ENCODE measurements at regions of chr9 and their contacts with region 1.

Region 1: DNA sequence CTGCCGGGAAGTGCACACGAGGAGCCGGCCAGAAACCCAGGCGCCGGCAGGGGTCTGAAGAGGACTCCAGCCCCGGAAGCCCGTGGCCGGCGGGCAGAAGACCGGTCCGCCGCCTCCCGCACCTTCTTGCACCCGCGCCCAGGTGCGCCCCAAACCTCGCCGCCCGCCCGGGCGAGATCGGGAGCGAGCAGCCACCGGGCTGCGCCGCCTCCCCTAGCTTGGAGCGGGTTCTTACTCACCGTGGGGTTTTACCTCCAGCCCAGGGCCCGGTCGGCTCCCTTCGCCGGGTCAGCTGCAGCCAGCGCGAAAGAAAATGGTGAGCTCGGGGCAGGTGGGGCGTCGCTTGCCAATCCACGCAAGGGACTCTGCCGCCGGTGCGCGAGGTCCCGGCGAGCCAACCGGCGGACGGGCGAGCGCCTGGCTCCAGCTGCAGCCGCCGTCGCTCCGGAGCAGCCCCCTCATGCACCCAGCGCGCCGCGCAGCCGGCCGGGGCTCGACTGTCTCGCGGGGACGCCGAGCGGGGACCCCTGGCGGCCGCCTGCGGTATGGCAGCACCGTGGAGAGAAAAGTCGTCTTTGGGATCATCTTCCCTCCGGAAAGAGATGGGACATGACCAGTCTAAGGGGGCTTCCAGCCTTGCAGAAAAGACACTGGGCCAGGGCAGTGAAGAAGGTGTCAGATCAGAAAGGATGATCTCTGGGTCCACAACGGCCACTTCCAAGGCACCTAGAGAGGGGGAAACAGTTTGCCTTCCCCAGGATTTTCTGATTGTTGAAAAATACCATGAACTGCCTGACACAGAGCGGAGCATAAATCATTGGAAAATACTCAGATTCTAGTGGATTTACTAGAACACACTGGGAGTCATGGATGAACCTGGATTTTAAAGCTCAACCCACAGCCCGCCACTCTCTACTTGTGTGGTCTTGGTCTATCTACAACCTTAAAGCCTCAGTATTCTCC is at the start of gene MOB3B:
- DNase-seq: peak; percentile 80 to 93 (median 86)
- ATAC-seq: peak; percentile 41 to 94 (median 84)
- H3K4me3 ChIP-seq: peak within 1 kb of the TSS; percentile 67 to 93 (median 80)
- H3K27ac ChIP-seq: peak within 1 kb of the TSS; percentile 17 to 92 (median 74)
- H3K4me1 ChIP-seq: peaks cover 0 to 38% (median 7%) of the 10 kb centered on the region in 12 donors
- H3K27me3 ChIP-seq: no peaks in the 10 kb centered on the region
- CTCF ChIP-seq: peak; percentile 82 to 98 (median 95)
- POLR2A ChIP-seq: no peak
- total RNA-seq, gene MOB3B: 0.54 to 2.8 (median 2.1) TPM

Region 2: GRCh38 chr9:26955921-26956859 is 573.4 kb before region 1 on chr9 and contains the start of gene IFT74:
- intact Hi-C with region 1: loop called in 1 of 10 experiments (anchors 10 kb)
- DNase-seq: peak; percentile 98 to 99 (median 99)
- ATAC-seq: peak; percentile 100
- H3K4me3 ChIP-seq: peak within 1 kb of the TSS; percentile 40 to 78 (median 68)
- H3K27ac ChIP-seq: peak within 1 kb of the TSS; percentile 27 to 97 (median 85)
- H3K4me1 ChIP-seq: peaks cover 0 to 24% (median 8%) of the 10 kb centered on the region in 12 donors
- H3K27me3 ChIP-seq: no peaks in the 10 kb centered on the region
- CTCF ChIP-seq: no peak
- POLR2A ChIP-seq: peak in 1 of 2 donors; percentile 69
- total RNA-seq, gene IFT74: 8.3 to 12.7 (median 9.6) TPM

Region 3: GRCh38 chr9:27340961-27341511 is 188.6 kb before region 1 on chr9:
- intact Hi-C with region 1: loop called in 2 of 10 experiments (anchors 2 to 5 kb)
- DNase-seq: no peak
- ATAC-seq: peak in 1 of 4 donors; percentile 24
- H3K4me3 ChIP-seq: no peak overlapping the region
- H3K27ac ChIP-seq: peak overlapping the region in 2 of 12 donors; percentile 3 to 53
- H3K4me1 ChIP-seq: peaks cover 0 to 47% (median 16%) of the 10 kb centered on the region in 12 donors
- H3K27me3 ChIP-seq: no peaks in the 10 kb centered on the region
- CTCF ChIP-seq: no peak
- POLR2A ChIP-seq: no peak

Region 4: GRCh38 chr9:27436234-27436633 is 93.4 kb before region 1 on chr9:
- intact Hi-C with region 1: loop called in 1 of 10 experiments (anchors 10 kb)
- DNase-seq: no peak
- ATAC-seq: peak in 2 of 4 donors; percentile 21 to 55
- H3K4me3 ChIP-seq: no peak overlapping the region
- H3K27ac ChIP-seq: no peak overlapping the region
- H3K4me1 ChIP-seq: peaks cover 0 to 46% (median 19%) of the 10 kb centered on the region in 12 donors
- H3K27me3 ChIP-seq: no peaks in the 10 kb centered on the region
- CTCF ChIP-seq: no peak
- POLR2A ChIP-seq: no peak

Region 5: GRCh38 chr9:27473111-27473529 is 56.5 kb before region 1 on chr9:
- intact Hi-C with region 1: loop called in 1 of 10 experiments (anchors 10 kb)
- DNase-seq: peak in 1 of 5 donors; percentile 40
- ATAC-seq: peak; percentile 40 to 79 (median 66)
- H3K4me3 ChIP-seq: no peak overlapping the region
- H3K27ac ChIP-seq: peak overlapping the region in 5 of 12 donors; percentile 0 to 63 (median 27)
- H3K4me1 ChIP-seq: peaks cover 0 to 62% (median 13%) of the 10 kb centered on the region in 12 donors
- H3K27me3 ChIP-seq: no peaks in the 10 kb centered on the region
- CTCF ChIP-seq: no peak
- POLR2A ChIP-seq: no peak